AG04449 (cell line): ENCODE measurements at regions of chr14 and their contacts with region 1.

Region 1: GRCh38 chr14:70086685-70087379 is 101.9 kb downstream of the SLC8A3 start:
- DNase-seq: no peak
- H3K4me3 ChIP-seq: no peak overlapping the region
- CTCF ChIP-seq: peak; percentile 69

Region 2: GRCh38 chr14:70096866-70097265 is 10.0 kb after region 1 on chr14:
- CTCF ChIA-PET with region 1: interaction called, 11 read pairs
- POLR2A ChIA-PET with region 1: no interaction called
- DNase-seq: no peak
- H3K4me3 ChIP-seq: no peak overlapping the region
- CTCF ChIP-seq: peak; percentile 7

Region 3: DNA sequence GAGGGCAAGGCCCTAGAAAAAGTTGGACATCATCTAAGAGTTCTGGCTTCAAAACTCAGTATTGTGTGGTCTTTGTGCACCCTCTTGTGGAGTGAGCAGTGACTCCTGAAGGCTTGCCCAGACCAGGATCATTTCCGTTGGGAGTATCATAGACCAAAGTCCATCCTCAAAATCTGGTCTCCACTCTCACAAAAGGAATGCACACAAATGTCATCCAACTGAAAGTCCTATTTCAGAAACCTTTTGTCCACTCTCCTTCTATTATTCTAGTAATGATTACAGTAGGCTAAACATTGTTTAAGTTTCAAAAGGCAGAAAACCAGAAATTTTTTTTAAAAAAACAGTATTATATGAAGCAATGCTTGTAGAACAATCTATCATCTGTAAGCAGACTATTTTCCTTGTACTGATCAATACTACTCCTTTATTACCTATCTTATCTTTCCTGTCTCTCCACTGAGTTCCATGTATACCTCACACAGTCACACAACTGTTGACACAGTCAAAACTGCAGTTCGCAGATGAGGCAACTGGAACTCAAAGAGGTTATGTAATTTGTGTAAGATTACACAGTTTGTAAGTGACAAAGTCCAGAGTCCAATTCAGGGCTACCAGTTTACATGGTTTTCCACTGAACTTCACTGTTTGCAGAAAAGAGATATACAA is 231.3 kb after region 1 on chr14:
- CTCF ChIA-PET with region 1: interaction called, 34 read pairs
- POLR2A ChIA-PET with region 1: no interaction called
- DNase-seq: peak; percentile 17
- H3K4me3 ChIP-seq: no peak overlapping the region
- CTCF ChIP-seq: peak; percentile 44

Region 4: GRCh38 chr14:70567791-70568190 is 481.0 kb after region 1 on chr14:
- CTCF ChIA-PET with region 1: interaction called, 13 read pairs
- POLR2A ChIA-PET with region 1: no interaction called
- DNase-seq: peak; percentile 5
- H3K4me3 ChIP-seq: no peak overlapping the region
- CTCF ChIP-seq: peak; percentile 53